Astrocyte of the cerebellum (primary cell): ENCODE measurements at regions of chr1 and their contacts with region 1.

Region 1: GRCh38 chr1:25134801-25135461 is 97.4 kb downstream of the SYF2 start:
- DNase-seq: no peak
- H3K4me3 ChIP-seq: no peak overlapping the region
- CTCF ChIP-seq: no peak

Region 2: DNA sequence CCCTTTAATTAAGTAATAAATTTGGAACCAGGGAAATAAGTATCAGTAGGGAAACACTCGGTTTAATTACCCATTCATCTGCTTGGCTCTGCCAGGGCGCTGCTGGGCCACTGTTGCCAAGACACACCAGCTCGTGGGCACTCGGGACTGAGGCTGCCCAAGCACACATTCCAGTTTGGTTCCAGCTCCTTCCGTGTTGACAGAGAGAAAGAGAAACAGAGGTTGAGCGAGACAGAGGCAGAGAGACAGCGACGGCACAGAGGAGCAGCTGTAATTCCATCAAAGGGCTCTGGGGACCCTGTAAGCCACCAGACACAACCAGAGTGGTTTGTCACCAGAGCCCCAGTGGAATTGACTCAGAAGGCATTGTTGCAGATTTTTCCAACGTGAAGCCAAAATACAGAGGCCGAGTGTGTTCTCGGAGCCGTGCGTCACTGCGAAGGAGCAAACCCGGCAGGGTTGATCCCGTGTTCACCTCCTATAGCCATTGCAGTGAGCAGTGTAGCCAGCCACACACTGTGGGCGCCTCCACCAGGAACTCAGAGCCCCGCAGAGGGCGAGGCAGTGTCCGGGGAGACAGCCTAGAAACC is 63.8 kb after region 1 on chr1:
- in situ Hi-C with region 1: loop called (anchors 5 kb)
- DNase-seq: no peak
- H3K4me3 ChIP-seq: no peak overlapping the region
- CTCF ChIP-seq: no peak